ENCODE measurements at regions of chr1 and their contacts with region 1.

Region 1: GRCh38 chr1:46036894-46037839 is 95.3 kb downstream of the PIK3R3 start:
- DNase-seq: peak; percentile 88
- H3K4me3 Mint-ChIP-seq: no peak overlapping the region
- H3K27ac Mint-ChIP-seq: no peak overlapping the region
- H3K4me1 Mint-ChIP-seq: no peaks in the 10 kb centered on the region
- H3K27me3 Mint-ChIP-seq: no peaks in the 10 kb centered on the region

Region 2: DNA sequence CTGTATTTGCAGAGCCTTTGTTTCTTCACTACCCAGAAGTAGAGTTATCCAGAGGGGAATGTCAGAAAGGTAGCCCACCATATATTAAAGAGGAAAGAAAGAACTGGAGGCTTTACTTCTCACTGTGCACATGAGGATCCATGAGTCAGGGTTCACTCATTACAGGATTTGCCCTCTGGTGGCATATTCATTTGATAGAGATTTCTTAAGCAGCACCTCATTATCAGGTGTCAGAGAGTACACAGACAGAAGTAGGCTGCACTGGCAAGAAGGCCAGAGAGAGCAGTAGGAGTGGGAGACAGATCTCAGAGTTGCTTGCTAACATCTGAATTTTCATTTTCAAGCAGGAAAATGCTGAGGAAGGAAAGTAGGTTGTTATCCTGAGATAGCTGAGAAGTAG is 28.6 kb before region 1 on chr1:
- CTCF ChIA-PET with region 1: no interaction called
- POLR2A ChIA-PET with region 1: no interaction called
- intact Hi-C with region 1: no loop called
- DNase-seq: no peak
- H3K4me3 Mint-ChIP-seq: no peak overlapping the region
- H3K27ac Mint-ChIP-seq: no peak overlapping the region
- H3K4me1 Mint-ChIP-seq: no peaks in the 10 kb centered on the region
- H3K27me3 Mint-ChIP-seq: no peaks in the 10 kb centered on the region

Region 3: GRCh38 chr1:46072975-46073374 is 35.8 kb after region 1 on chr1:
- CTCF ChIA-PET with region 1: no interaction called
- POLR2A ChIA-PET with region 1: no interaction called
- intact Hi-C with region 1: no loop called
- DNase-seq: no peak
- H3K4me3 Mint-ChIP-seq: no peak overlapping the region
- H3K27ac Mint-ChIP-seq: no peak overlapping the region
- H3K4me1 Mint-ChIP-seq: no peaks in the 10 kb centered on the region
- H3K27me3 Mint-ChIP-seq: no peaks in the 10 kb centered on the region

Region 4: DNA sequence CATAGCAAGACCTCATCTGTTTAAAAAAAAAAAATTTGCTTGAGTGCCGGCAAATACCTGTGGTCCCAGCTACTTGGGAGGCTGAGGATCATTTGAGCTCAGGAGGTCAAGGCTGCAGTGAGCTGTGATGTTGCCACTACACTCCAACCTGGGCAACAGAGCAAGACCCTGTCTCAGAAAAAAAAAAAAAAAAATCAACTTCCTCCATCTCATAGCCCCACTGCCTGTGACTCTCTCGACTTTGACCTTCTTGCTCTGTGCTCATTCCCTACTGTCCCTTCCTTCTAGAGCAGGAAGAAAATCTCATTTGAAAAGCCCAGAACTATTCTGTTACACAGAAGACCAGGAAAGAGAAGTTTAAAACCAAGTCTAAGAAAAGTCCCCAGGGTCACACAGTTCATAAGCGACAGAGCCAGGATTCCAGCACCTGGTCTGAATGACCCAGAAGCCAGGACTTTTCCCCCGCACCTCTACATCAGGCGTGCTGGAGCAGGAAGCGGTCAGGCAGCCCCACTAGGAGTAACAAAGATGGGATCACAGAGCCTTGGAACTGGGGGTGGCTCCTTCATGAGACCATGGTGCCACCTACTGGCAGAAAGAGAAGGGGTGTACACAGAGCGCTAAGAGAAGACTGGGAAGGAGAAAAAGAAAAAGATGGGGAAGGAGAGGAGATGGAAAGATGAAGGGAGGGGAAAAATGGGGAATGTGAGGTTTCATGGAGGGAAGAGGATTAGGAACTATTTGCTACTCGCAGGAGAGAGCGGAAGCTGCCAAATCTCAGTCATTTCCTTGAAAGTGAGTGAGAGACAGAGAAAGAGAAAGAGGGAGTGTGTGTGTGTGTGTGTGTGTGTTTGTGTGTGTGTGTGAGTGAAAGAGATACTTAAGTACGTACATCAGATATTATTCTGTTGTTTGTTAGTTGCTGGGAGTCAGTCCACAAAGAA is 142.2 kb after region 1 on chr1:
- CTCF ChIA-PET with region 1: interaction called, 67 read pairs
- POLR2A ChIA-PET with region 1: no interaction called
- intact Hi-C with region 1: loop called (anchors 1 kb)
- DNase-seq: peak; percentile 75
- H3K4me3 Mint-ChIP-seq: no peak overlapping the region
- H3K27ac Mint-ChIP-seq: no peak overlapping the region
- H3K4me1 Mint-ChIP-seq: peaks cover 6% of the 10 kb centered on the region
- H3K27me3 Mint-ChIP-seq: no peaks in the 10 kb centered on the region